ENCODE measurements at regions of chr16 and their contacts with region 1.

Region 1: GRCh38 chr16:83674931-83675535 is 132.7 kb upstream of the HSBP1 start:
- DNase-seq: no peak

Region 2: DNA sequence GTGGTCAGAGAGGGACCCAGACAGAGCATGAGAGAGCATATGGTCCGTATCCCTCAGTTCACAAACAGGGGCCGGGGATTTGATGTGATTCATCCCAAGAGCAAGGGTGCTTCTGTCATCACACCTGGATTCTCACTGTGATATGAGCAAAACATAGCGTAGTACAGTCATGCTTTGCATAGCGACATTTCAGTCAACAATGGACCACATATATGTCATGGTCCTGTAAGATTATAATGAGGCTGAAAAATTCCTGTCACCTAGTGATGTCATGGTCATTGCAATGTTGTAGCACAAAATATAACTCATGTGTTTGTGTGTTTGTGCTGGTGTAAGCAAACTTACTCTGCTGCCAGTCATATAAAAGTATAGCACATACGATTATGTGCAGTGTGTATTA is 1255.7 kb before region 1 on chr16:
- intact Hi-C with region 1: loop called in 1 of 2 experiments (anchors 5 kb)
- DNase-seq: no peak

Measured in posterior vena cava (tissue), 2 donors.